ENCODE measurements at regions of chr3 and their contacts with region 1.

Region 1: GRCh38 chr3:158539414-158540014 is 31.5 kb upstream of the MLF1 start:
- DNase-seq: peak; percentile 18
- ATAC-seq: peak; percentile 82
- H3K4me3 ChIP-seq: no peak overlapping the region
- H3K27ac ChIP-seq: peak overlapping the region; percentile 9; the same call in 1 of the 2 replicates
- H3K4me1 ChIP-seq: no peaks in the 10 kb centered on the region
- H3K27me3 ChIP-seq: no peaks in the 10 kb centered on the region
- CTCF ChIP-seq: peak; percentile 69; the same call in 1 of the 2 replicates

Region 2: DNA sequence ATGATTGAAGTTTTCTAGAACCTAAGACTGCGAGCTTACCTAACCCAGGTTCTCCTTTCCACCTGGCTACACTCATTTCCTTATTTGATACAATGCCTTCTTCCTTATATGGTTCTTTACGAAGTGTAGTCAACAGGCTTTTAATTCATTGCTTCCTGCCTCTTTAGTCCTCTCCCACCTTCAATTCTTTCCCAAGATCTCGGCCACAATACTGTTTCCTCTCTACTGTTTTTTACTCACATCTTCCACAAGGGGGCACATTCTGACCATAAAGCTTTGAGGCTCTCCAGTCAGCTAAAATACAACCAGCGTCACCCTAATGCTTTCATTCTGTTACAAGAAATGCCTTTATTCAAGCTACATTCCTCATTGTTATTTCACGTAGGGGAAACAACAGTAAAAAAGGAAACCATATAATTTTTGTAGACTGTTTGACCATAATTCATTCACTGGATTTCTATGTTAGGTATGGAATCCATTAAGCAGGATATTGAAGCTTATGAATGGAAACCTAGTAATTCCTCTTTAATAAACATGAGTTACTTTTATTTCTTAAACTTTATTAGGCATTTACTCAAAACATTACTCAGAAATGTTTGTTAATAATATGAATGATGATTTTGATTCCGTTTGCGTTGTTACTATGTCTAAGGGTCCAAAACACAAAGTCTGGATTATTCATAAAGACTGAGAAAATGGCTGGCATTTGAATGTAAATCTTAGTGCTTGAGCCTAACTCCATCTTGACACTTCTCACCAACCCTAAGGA is 1006.8 kb before region 1 on chr3:
- CTCF ChIA-PET with region 1: no interaction called
- POLR2A ChIA-PET with region 1: no interaction called
- in situ Hi-C with region 1: no loop called
- intact Hi-C with region 1: loop called (anchors 10 kb)
- DNase-seq: peak; percentile 42
- ATAC-seq: peak; percentile 94
- H3K4me3 ChIP-seq: no peak overlapping the region
- H3K27ac ChIP-seq: no peak overlapping the region
- H3K4me1 ChIP-seq: no peaks in the 10 kb centered on the region
- H3K27me3 ChIP-seq: no peaks in the 10 kb centered on the region; the same call in 1 of the 2 replicates
- CTCF ChIP-seq: peak; percentile 82

Region 3: DNA sequence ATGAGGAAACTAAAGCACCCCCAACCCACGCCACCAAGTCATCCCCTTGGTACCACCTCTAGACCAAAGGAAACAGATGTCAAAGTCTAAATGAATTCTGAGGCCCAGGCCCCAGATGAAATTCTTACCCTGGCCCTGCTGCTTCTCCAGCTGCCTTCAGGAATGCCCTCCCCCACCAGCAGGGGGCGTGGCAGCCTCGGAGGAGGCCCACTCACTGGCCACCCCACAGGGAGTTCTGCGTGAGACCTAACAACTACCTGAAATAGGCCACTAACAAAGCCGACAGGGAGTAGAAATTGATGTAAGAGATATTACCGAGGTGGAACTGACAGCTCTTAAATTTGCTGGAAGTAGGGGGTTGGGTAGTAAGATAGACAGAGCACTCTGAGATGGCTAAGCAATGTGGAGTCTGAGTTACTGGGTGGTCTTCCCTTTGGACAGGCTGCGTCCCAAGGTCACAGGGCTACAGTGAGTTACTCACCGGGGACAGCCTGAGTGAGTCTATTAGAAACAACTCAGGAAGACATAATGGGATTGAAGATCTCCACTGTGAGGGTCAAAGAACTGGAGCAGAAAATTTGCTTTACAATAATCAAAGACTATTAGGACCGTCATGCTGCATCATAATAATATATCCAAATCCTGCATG is 674.0 kb before region 1 on chr3:
- CTCF ChIA-PET with region 1: no interaction called
- POLR2A ChIA-PET with region 1: no interaction called
- in situ Hi-C with region 1: no loop called
- intact Hi-C with region 1: loop called (anchors 10 kb)
- DNase-seq: no peak
- ATAC-seq: 0 out of 2 replicates have a peak, but pooled peaks have one; percentile 58
- H3K4me3 ChIP-seq: no peak overlapping the region
- H3K27ac ChIP-seq: no peak overlapping the region
- H3K4me1 ChIP-seq: no peaks in the 10 kb centered on the region
- H3K27me3 ChIP-seq: no peaks in the 10 kb centered on the region
- CTCF ChIP-seq: peak; percentile 66

Region 4: GRCh38 chr3:158434412-158435038 is 105.0 kb before region 1 on chr3:
- CTCF ChIA-PET with region 1: no interaction called
- POLR2A ChIA-PET with region 1: no interaction called
- in situ Hi-C with region 1: no loop called
- intact Hi-C with region 1: loop called (anchors 10 kb)
- DNase-seq: peak; percentile 63
- ATAC-seq: peak; percentile 98
- H3K4me3 ChIP-seq: no peak overlapping the region
- H3K27ac ChIP-seq: no peak overlapping the region
- H3K4me1 ChIP-seq: no peaks in the 10 kb centered on the region
- H3K27me3 ChIP-seq: no peaks in the 10 kb centered on the region
- CTCF ChIP-seq: peak; percentile 82; the same call in 1 of the 2 replicates

Region 5: DNA sequence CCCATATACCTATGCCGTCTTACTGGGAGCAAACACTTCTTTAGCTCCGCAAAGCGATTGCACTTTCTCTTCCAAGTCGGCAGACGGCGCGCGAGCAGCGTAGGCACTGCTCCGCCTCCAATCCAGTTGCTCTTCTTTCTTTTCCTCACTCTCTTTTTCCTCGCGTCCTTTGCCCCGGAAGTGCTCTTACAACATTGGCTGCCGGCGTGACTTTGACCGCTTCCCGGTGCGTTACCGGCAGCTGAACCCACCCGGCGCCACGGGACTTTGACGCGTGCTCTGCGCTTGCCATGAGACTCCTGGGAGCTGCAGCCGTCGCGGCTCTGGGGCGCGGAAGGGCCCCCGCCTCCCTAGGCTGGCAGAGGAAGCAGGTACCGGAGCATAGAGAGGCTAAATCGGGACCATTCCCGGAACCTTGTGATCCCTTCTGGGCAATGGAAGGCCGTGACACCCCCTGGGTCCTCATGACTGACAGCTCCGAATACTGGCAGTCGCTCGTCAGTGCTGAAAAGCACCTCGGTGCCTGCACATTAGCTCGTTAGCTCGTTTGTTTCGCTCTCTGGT is 104.9 kb after region 1 on chr3 and contains the start of gene GFM1:
- CTCF ChIA-PET with region 1: no interaction called
- POLR2A ChIA-PET with region 1: no interaction called
- in situ Hi-C with region 1: no loop called
- intact Hi-C with region 1: loop called (anchors 10 kb)
- DNase-seq: peak; percentile 82
- ATAC-seq: peak; percentile 97
- H3K4me3 ChIP-seq: peak within 1 kb of the TSS; percentile 65 to 89
- H3K27ac ChIP-seq: peak within 1 kb of the TSS; percentile 92
- H3K4me1 ChIP-seq: peaks cover 26% of the 10 kb centered on the region
- H3K27me3 ChIP-seq: no peaks in the 10 kb centered on the region
- CTCF ChIP-seq: peak; percentile 99
- total RNA-seq, gene GFM1: 59.3 TPM

Region 6: GRCh38 chr3:158790901-158791589 is 251.5 kb after region 1 on chr3:
- CTCF ChIA-PET with region 1: interaction called, 4 read pairs
- POLR2A ChIA-PET with region 1: no interaction called
- in situ Hi-C with region 1: no loop called
- intact Hi-C with region 1: loop called (anchors 5 kb)
- DNase-seq: no peak
- ATAC-seq: peak; percentile 71
- H3K4me3 ChIP-seq: peak overlapping the region in 1 of 2 experiments; percentile 8; a peak in 1 of 4 replicates
- H3K27ac ChIP-seq: peak overlapping the region; percentile 90
- H3K4me1 ChIP-seq: peaks cover 42% of the 10 kb centered on the region
- H3K27me3 ChIP-seq: no peaks in the 10 kb centered on the region
- CTCF ChIP-seq: peak; percentile 93

Region 7: GRCh38 chr3:158819282-158819681 is 279.8 kb after region 1 on chr3:
- CTCF ChIA-PET with region 1: no interaction called
- POLR2A ChIA-PET with region 1: no interaction called
- in situ Hi-C with region 1: no loop called
- intact Hi-C with region 1: no loop called
- DNase-seq: no peak
- ATAC-seq: no peak
- H3K4me3 ChIP-seq: no peak overlapping the region
- H3K27ac ChIP-seq: no peak overlapping the region
- H3K4me1 ChIP-seq: no peaks in the 10 kb centered on the region
- H3K27me3 ChIP-seq: no peaks in the 10 kb centered on the region
- CTCF ChIP-seq: no peak